CD4-positive, alpha-beta memory T cell (primary cell): ENCODE measurements at regions of chr19 and their contacts with region 1.

Region 1: GRCh38 chr19:3821857-3822364 is 35.7 kb upstream of the MATK start:
- DNase-seq: peak; percentile 82 to 88 (median 85)
- H3K4me3 ChIP-seq: no peak overlapping the region
- H3K4me3 Mint-ChIP-seq: peak overlapping the region in 6 of 8 donors; percentile 41 to 76 (median 58)
- H3K27ac ChIP-seq: no peak overlapping the region
- H3K27ac Mint-ChIP-seq: peak overlapping the region; percentile 42 to 84 (median 61)
- H3K4me1 ChIP-seq: peaks cover 13% of the 10 kb centered on the region
- H3K4me1 Mint-ChIP-seq: peaks cover 7 to 29% (median 16%) of the 10 kb centered on the region in 4 donors
- H3K27me3 ChIP-seq: no peaks in the 10 kb centered on the region
- H3K27me3 Mint-ChIP-seq: no peaks in the 10 kb centered on the region

Region 2: GRCh38 chr19:3700221-3701032 is 121.5 kb before region 1 on chr19 and contains the start of gene PIP5K1C:
- CTCF ChIA-PET with region 1: interaction called, 5 read pairs
- POLR2A ChIA-PET with region 1: no interaction called
- intact Hi-C with region 1: loop called (anchors 1 kb)
- DNase-seq: peak; percentile 86 to 93 (median 90)
- H3K4me3 ChIP-seq: peak within 1 kb of the TSS; percentile 50 to 52
- H3K4me3 Mint-ChIP-seq: peak within 1 kb of the TSS; percentile 87 to 96 (median 90)
- H3K27ac ChIP-seq: peak within 1 kb of the TSS; percentile 47
- H3K27ac Mint-ChIP-seq: peak within 1 kb of the TSS; percentile 76 to 92 (median 89)
- H3K4me1 ChIP-seq: peaks cover 17% of the 10 kb centered on the region
- H3K4me1 Mint-ChIP-seq: peaks cover 11 to 38% (median 27%) of the 10 kb centered on the region in 4 donors
- H3K27me3 ChIP-seq: no peaks in the 10 kb centered on the region
- H3K27me3 Mint-ChIP-seq: no peaks in the 10 kb centered on the region
- total RNA-seq, gene PIP5K1C: 28.2 to 29.7 TPM

Region 3: DNA sequence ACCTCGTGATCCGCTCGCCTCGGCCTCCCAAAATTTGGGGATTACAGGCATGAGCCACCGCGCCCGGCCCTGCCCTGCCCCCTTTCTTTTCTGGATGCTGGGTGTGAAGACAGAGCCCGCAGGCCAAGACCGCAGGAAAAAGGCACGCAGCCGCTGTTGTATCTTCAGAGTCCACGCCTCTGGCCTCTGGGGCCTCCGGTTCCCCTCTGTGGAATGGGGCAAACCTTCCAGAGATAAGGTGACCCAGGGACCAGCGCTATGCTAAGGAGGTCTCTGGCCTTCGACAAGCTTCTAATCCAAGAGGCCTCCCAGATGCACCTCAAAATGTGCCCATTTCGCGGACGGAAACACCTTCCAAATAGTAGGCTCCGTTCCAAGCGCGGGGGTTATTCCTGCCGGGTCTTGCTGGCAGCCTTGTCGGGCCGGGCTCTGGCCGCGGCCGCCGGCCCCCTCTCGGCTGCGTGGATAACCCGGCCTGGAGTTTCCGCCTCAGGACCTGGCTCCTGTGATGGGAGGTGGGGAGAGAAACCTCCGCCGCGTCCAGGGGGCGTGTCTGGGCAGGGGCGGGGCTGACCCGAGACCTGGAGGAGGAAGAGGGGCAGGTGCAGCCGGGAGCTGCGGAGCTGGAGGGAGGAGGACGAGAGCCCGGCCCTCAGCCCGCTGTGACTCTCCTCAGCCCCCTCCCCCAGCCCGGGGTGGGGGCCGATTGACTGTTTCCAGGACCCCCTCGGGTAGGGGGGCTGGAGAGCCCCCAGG is 100.6 kb before region 1 on chr19:
- CTCF ChIA-PET with region 1: interaction called, 3 read pairs
- POLR2A ChIA-PET with region 1: no interaction called
- intact Hi-C with region 1: loop called (anchors 5 kb)
- DNase-seq: peak; percentile 88 to 91 (median 89)
- H3K4me3 ChIP-seq: peak overlapping the region; percentile 40 to 57
- H3K4me3 Mint-ChIP-seq: peak overlapping the region; percentile 80 to 88 (median 85)
- H3K27ac ChIP-seq: peak overlapping the region; percentile 9
- H3K27ac Mint-ChIP-seq: peak overlapping the region in 2 of 7 donors; percentile 15 to 75
- H3K4me1 ChIP-seq: peaks cover 22% of the 10 kb centered on the region
- H3K4me1 Mint-ChIP-seq: peaks cover 4 to 24% (median 15%) of the 10 kb centered on the region in 4 donors
- H3K27me3 ChIP-seq: peaks cover 6% of the 10 kb centered on the region
- H3K27me3 Mint-ChIP-seq: peaks cover 0 to 3% of the 10 kb centered on the region in 2 donors

Region 4: GRCh38 chr19:3785938-3786824 is 35.7 kb before region 1 on chr19 and contains the start of gene MATK:
- CTCF ChIA-PET with region 1: interaction called, 5 read pairs
- POLR2A ChIA-PET with region 1: interaction called, 4 read pairs
- intact Hi-C with region 1: loop called (anchors 1 kb)
- DNase-seq: peak in 1 of 5 donors; percentile 32
- H3K4me3 ChIP-seq: peak within 1 kb of the TSS; percentile 23 to 36
- H3K4me3 Mint-ChIP-seq: peak within 1 kb of the TSS; percentile 82 to 85 (median 83)
- H3K27ac ChIP-seq: peak within 1 kb of the TSS; percentile 31
- H3K27ac Mint-ChIP-seq: peak within 1 kb of the TSS in 4 of 7 donors; percentile 54 to 88 (median 60)
- H3K4me1 ChIP-seq: peaks cover 6% of the 10 kb centered on the region
- H3K4me1 Mint-ChIP-seq: peaks cover 8 to 18% (median 12%) of the 10 kb centered on the region in 4 donors
- H3K27me3 ChIP-seq: no peaks in the 10 kb centered on the region
- H3K27me3 Mint-ChIP-seq: no peaks in the 10 kb centered on the region
- total RNA-seq, gene MATK: 7.2 to 9.6 TPM

Region 5: DNA sequence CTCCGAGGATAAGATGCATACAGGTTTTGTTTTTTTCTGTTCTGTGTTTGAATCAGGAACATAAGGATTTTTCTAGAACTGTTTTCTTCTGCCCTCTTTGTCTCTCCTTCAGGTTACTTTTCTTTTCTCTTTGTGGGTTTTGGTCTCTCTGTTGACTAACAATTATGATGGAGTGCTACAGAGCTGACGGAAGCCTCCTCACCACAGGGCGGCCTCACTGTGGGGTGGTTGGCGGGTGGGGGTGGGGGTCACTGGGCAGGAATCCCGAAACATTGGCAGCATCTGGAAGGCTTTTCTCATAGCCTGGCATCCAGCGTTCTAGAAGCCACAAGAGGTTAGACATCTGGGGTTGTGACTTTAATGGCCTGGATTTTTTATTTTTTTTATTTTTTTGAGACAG is 23.8 kb before region 1 on chr19:
- CTCF ChIA-PET with region 1: interaction called, 20 read pairs
- POLR2A ChIA-PET with region 1: interaction called, 4 read pairs
- intact Hi-C with region 1: no loop called
- DNase-seq: peak; percentile 47 to 67 (median 57)
- H3K4me3 ChIP-seq: no peak overlapping the region
- H3K4me3 Mint-ChIP-seq: peak overlapping the region in 7 of 8 donors; percentile 48 to 83 (median 67)
- H3K27ac ChIP-seq: no peak overlapping the region
- H3K27ac Mint-ChIP-seq: peak overlapping the region; percentile 18 to 85 (median 59)
- H3K4me1 ChIP-seq: peaks cover 26% of the 10 kb centered on the region
- H3K4me1 Mint-ChIP-seq: peaks cover 18 to 36% (median 23%) of the 10 kb centered on the region in 4 donors
- H3K27me3 ChIP-seq: no peaks in the 10 kb centered on the region
- H3K27me3 Mint-ChIP-seq: no peaks in the 10 kb centered on the region

Region 6: DNA sequence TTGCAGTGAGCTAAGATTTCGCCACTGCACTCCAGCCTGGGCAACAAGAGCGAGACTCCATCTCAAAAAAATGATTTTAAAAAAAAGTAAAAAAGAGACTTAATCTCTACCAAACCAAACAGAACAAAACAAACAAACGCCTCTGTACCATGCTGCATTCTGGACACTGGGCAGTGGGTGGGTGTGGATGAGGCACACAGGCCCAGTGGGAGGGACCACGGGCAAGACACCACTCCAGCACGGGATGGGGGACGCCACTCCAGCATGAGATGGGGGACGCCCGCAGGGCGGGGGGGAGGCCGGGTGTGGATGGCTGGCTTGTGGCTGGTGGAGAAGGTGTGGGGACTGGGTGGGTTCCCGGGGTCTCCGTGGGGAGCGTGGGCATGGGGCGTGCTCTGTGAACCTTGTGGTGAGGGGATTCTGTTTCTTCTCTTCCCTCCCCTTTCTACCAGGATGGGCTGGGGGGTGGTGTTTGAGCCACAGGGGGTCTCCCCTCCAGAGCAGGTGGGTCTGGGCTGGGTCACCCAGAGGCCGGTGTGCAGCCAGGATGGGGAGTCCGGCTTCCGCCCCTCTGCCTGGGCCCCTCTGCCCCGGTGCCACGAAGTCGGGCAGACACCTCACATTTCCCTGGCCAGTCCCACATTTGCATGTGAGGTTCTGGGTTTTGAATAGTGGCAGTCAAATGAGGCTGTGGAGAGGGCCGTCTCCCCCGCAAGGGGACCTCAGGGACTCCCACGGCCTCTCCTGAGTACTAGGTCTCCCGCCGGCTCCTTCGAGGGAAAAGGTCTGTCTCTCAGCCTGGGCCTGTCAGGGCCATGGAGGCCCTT is 11.8 kb before region 1 on chr19:
- CTCF ChIA-PET with region 1: interaction called, 27 read pairs
- POLR2A ChIA-PET with region 1: interaction called, 19 read pairs
- intact Hi-C with region 1: no loop called
- DNase-seq: peak in 1 of 5 donors; percentile 19
- H3K4me3 ChIP-seq: no peak overlapping the region
- H3K4me3 Mint-ChIP-seq: no peak overlapping the region
- H3K27ac ChIP-seq: no peak overlapping the region
- H3K27ac Mint-ChIP-seq: peak overlapping the region in 2 of 7 donors; percentile 68 to 86
- H3K4me1 ChIP-seq: peaks cover 33% of the 10 kb centered on the region
- H3K4me1 Mint-ChIP-seq: peaks cover 26 to 50% (median 36%) of the 10 kb centered on the region in 4 donors
- H3K27me3 ChIP-seq: no peaks in the 10 kb centered on the region
- H3K27me3 Mint-ChIP-seq: no peaks in the 10 kb centered on the region